HepG2 (cell line): ENCODE measurements at regions of chr19 and their contacts with region 1.

Region 1: DNA sequence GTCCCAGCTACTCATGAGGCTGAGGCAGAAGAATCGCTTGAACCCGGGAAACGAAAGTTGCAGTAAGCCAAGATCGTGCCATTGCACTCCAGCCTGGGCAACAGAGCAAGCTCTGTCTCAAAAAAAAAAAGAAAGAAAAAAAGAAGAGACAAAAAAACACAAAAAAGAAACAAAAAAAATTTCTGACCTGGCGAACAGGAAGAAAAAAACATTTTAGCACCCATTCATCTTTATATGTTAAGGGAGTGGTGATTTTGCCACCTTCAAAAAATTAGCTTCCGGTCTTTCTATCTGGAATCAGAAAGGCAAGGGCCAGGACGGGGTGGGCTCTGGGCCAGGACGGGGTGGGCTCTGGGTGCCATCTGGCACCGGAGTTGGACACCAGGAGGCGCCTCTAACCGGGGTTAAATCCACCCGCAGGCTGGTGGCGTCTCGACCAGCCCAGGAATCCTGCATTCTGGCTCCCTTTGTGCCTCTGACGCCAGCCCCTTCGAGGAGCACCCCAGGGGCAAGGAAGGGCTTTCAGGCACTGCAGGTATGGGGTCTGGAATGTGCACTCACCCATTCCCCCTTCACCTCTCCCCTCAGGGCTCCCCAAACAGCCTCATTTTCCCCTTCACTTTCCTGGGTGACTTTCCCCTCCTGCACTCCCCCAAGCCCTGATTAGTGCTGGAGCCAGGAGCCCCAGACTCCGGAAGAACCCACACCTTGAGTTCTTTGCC is 10.4 kb upstream of the ZSWIM4 start:
- DNase-seq: peak; percentile 44
- ATAC-seq: peak; percentile 90
- H3K4me3 ChIP-seq: peak overlapping the region in 1 of 3 experiments; percentile 64; a peak in 2 of 6 replicates
- H3K27ac ChIP-seq: no peak overlapping the region
- H3K4me1 ChIP-seq: peaks cover 35% of the 10 kb centered on the region
- H3K27me3 ChIP-seq: peaks cover 0 to 10% of the 10 kb centered on the region in 2 experiments; a peak in 2 of 5 replicates
- CTCF ChIP-seq: peak; percentile 85
- EP300 ChIP-seq: no peak
- POLR2A ChIP-seq: no peak
- RAD21 ChIP-seq: peak; percentile 81

Region 2: DNA sequence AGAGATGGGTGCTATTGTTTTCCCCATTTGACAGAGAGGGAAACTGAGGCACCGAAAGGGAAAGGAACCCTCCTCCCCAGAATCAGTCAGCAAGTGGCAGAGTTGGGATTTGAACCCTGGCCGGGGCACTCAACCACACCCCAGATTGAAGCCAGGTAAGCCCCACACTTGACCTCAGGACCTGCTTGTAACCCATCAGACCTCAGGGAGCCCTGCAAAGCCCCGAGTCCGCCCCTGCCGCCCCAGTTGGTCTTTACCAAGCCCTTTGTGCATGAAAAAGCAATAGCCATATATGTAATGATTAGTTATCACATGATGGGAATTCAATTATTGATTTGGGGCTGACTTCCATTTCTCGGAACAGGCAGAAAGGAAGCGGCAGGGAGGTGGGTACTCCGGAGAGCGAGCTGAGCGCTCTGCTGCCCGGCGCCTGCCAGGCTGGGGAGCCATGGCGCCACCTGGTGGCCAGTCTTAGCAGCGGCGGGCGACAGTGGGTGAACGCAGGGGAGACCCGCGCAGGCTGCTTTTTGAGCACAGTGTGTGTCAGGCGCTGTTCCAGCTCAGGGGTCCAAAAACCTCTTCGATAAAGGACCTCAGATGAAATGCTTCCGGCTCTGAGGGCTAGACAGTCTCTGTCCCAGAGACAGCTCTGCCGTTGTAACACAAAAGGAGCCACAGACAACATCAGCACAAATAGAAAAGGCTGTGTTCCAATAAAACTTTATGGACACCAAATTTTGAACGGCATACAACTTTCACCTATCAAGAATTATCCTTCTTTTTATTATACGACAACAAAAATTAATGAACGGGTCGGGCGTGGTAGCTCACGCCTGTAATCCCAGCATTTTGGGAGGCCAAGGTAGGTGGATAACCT is 195.7 kb before region 1 on chr19:
- CTCF ChIA-PET with region 1: no interaction called
- POLR2A ChIA-PET with region 1: no interaction called
- in situ Hi-C with region 1: no loop called
- intact Hi-C with region 1: no loop called
- DNase-seq: peak; percentile 22
- ATAC-seq: peak; percentile 93
- H3K4me3 ChIP-seq: no peak overlapping the region
- H3K27ac ChIP-seq: no peak overlapping the region
- H3K4me1 ChIP-seq: no peaks in the 10 kb centered on the region
- H3K27me3 ChIP-seq: no peaks in the 10 kb centered on the region
- CTCF ChIP-seq: peak; percentile 88
- EP300 ChIP-seq: no peak
- POLR2A ChIP-seq: no peak
- RAD21 ChIP-seq: peak; percentile 75

Region 3: GRCh38 chr19:13833330-13834243 is 48.7 kb after region 1 on chr19:
- CTCF ChIA-PET with region 1: no interaction called
- POLR2A ChIA-PET with region 1: no interaction called
- in situ Hi-C with region 1: no loop called
- intact Hi-C with region 1: loop called (anchors 2 kb)
- DNase-seq: peak; percentile 84
- ATAC-seq: peak; percentile 94
- H3K4me3 ChIP-seq: peak overlapping the region; percentile 49 to 74 (median 66)
- H3K27ac ChIP-seq: peak overlapping the region; percentile 49
- H3K4me1 ChIP-seq: peaks cover 20% of the 10 kb centered on the region
- H3K27me3 ChIP-seq: no peaks in the 10 kb centered on the region
- CTCF ChIP-seq: peak; percentile 82
- EP300 ChIP-seq: no peak
- POLR2A ChIP-seq: peak; percentile 26 to 58; a peak in 2 of 4 replicates
- RAD21 ChIP-seq: peak; percentile 79

Region 4: GRCh38 chr19:13861732-13862531 is 77.0 kb after region 1 on chr19:
- CTCF ChIA-PET with region 1: interaction called, 38 read pairs
- POLR2A ChIA-PET with region 1: interaction called, 7 read pairs
- in situ Hi-C with region 1: loop called (anchors 5 kb)
- intact Hi-C with region 1: loop called (anchors 1 kb)
- DNase-seq: peak; percentile 77
- ATAC-seq: peak; percentile 82
- H3K4me3 ChIP-seq: peak overlapping the region; percentile 67 to 77 (median 75)
- H3K27ac ChIP-seq: peak overlapping the region; percentile 54
- H3K4me1 ChIP-seq: peaks cover 36% of the 10 kb centered on the region
- H3K27me3 ChIP-seq: peaks cover 0 to 9% of the 10 kb centered on the region in 2 experiments; a peak in 1 of 5 replicates
- CTCF ChIP-seq: peak; percentile 95
- EP300 ChIP-seq: no peak
- POLR2A ChIP-seq: no peak
- RAD21 ChIP-seq: peak; percentile 97